A673 (cell line): ENCODE measurements at regions of chr1 and their contacts with region 1.

Region 1: DNA sequence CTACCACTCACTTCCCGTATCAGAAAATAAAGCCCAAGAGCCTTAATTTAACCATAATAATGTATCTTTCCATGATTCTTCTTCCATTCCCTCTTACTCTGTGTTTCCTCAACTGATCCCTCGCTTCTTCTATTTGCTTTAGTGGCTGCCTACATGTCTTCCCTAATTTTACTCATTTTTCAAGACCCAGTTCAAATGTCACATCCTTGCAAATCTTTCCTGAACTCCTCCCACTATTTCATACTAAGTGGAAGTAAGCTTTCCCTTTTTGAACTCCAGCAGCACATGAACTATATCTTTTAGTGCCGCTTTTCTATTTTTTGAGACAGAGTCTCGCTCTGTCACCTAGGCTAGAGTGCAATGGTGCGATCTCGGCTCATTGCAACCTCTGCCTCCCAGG is 3.8 kb upstream of the NFYC start:
- DNase-seq: no peak
- H3K4me3 ChIP-seq: no peak overlapping the region
- H3K27ac ChIP-seq: no peak overlapping the region
- H3K4me1 ChIP-seq: peaks cover 6% of the 10 kb centered on the region
- H3K27me3 ChIP-seq: no peaks in the 10 kb centered on the region
- CTCF ChIP-seq: no peak

Region 2: DNA sequence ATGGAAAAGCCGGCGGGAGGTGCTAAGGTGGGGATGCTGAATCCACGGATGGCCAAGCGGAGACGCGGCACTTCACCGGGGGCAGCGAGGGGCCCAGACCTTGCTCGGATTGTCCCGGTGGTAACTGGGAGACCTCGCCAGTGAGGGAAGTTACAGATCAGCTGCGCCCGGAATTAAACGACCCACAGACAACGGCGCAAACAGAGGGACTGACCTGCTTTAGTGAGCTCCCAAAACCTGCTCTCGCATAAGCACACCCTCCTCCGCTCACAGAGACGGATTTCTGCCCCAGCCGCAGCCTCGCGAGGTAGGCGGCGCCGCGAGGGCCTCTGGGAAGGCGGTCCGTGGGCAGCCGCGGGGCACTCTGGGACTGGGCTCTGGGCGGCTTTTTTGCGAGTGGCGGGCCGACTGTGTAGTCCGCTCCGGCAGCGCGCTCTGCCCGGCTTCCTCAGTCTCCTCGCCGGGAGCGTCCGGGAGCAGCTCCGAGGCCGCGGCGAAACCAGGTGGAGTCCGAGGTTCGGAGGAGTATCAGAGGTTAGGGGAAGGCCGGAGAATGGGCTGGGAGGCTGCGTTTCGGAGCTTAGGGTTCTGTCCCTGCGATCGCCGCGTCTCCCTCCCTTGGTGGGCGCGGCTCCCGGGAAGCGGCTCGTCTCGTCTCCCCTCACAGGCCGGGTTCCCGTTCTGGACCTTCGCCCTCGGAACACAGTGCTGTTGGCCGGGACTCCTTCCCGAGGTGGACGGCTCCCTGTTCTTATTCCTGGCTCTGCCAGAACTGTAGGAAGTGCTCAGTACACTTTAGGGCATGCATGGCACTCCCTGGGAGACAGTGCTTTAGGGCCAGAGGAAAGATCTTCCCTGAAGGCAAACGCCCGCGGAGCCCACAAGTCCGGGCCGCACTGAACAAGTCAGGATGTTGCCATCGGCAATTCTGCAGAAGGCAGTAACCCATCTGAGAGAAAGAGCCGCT is 179.0 kb before region 1 on chr1 and contains the start of gene EXO5:
- CTCF ChIA-PET with region 1: interaction called, 4 read pairs
- POLR2A ChIA-PET with region 1: interaction called, 24 read pairs
- intact Hi-C with region 1: no loop called
- DNase-seq: peak; percentile 90
- H3K4me3 ChIP-seq: peak within 1 kb of the TSS; percentile 68
- H3K27ac ChIP-seq: peak within 1 kb of the TSS; percentile 76
- H3K4me1 ChIP-seq: peaks cover 3% of the 10 kb centered on the region
- H3K27me3 ChIP-seq: no peaks in the 10 kb centered on the region
- CTCF ChIP-seq: no peak
- total RNA-seq, gene EXO5: 15.1 and 20.3 TPM in 2 replicates

Region 3: DNA sequence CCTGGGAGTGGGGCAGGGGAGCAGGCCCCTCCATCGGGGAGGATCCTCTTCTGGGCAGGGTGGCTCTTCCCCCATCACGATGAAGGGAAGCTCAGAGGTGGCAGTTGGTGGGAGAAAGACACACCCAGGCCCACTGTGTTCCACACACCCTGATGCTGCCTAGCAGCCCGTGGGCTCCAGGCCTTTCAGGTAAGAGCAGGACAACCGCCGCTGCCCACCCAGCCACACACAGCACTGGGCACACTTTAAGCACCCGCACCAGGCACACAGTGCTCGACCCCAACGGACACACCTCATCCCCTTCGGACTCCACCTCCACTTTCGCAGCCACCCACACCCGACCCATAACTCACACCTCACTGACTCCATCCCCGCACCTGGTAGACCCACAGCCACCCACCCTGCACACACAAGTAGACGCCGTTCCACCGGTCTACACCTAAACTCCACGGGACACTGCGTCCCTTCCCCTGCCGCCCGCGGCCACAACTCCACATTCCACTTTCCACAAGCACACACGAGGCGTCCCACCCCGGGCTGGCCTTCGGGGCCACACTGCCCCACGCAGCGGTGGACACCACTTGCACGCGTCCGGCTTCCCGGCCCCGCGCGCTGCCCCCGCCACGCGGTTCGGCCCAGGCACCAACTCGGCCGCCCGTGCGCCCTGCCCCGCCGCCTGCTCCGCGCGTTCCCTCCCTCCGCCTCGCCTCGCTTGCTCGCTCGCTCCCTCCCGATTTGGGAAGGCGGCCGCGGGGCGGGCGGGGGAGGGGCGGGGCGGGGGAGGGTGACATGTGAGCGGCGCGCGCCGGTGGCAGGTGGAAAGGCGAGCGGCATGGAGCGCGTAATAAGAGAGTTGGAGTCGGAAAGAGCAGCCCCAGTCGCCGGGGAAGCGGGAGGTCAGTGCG is 95.6 kb after region 1 on chr1 and contains the start of gene KCNQ4:
- CTCF ChIA-PET with region 1: no interaction called
- POLR2A ChIA-PET with region 1: no interaction called
- intact Hi-C with region 1: no loop called
- DNase-seq: peak; percentile 62
- H3K4me3 ChIP-seq: peak within 1 kb of the TSS; percentile 43
- H3K27ac ChIP-seq: no peak within 1 kb of the TSS
- H3K4me1 ChIP-seq: peaks cover 12% of the 10 kb centered on the region
- H3K27me3 ChIP-seq: no peaks in the 10 kb centered on the region
- CTCF ChIP-seq: no peak
- total RNA-seq, gene KCNQ4: 0.62 and 1.4 TPM in 2 replicates